ENCODE measurements at regions of chr10 and their contacts with region 1.

Region 1: GRCh38 chr10:70903262-70903921 is 15.0 kb upstream of the PCBD1 start:
- DNase-seq: peak; percentile 23
- ATAC-seq: peak; percentile 75
- H3K4me3 ChIP-seq: no peak overlapping the region
- H3K27ac ChIP-seq: no peak overlapping the region
- H3K4me1 ChIP-seq: no peaks in the 10 kb centered on the region
- H3K27me3 ChIP-seq: peaks cover 6 to 55% of the 10 kb centered on the region in 2 experiments; a peak in 4 of 5 replicates
- CTCF ChIP-seq: peak; percentile 93
- EP300 ChIP-seq: no peak
- POLR2A ChIP-seq: no peak
- RAD21 ChIP-seq: peak; percentile 72

Region 2: DNA sequence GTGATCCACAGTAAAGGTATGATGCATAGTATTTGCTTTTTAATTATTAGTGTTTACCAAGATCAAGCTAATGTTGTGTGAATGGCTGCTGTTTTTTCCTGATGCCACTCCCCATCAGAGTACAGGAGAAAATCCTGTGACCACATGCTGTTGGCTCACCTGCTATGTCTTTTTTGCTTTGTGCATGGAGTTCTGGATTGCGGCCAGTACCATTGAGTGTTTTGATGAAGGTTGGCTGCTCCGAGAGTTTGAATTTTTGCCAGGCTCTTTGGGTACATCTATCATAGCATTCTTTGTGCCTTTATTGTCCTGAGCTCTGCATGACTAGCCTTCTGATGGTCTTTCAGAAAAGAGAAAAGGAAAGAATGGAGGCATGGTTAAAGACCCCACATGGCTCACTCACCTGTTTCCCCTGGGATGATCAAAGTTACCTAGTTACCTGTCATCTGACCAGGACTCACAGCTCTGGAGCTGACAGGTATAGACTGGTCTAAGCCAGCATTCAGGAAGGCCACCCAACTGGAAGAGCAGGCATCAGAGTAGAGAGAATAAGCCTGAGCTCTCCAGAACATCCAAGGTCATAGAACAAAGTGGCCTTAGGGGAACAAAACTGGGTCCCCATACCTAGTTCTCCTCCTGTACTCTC is 99.5 kb before region 1 on chr10:
- CTCF ChIA-PET with region 1: no interaction called
- POLR2A ChIA-PET with region 1: no interaction called
- in situ Hi-C with region 1: no loop called
- intact Hi-C with region 1: no loop called
- DNase-seq: no peak
- ATAC-seq: no peak
- H3K4me3 ChIP-seq: no peak overlapping the region
- H3K27ac ChIP-seq: no peak overlapping the region
- H3K4me1 ChIP-seq: peaks cover 7% of the 10 kb centered on the region
- H3K27me3 ChIP-seq: no peaks in the 10 kb centered on the region; a peak in 2 of 5 replicates
- CTCF ChIP-seq: no peak
- EP300 ChIP-seq: no peak
- POLR2A ChIP-seq: no peak
- RAD21 ChIP-seq: no peak

Region 3: DNA sequence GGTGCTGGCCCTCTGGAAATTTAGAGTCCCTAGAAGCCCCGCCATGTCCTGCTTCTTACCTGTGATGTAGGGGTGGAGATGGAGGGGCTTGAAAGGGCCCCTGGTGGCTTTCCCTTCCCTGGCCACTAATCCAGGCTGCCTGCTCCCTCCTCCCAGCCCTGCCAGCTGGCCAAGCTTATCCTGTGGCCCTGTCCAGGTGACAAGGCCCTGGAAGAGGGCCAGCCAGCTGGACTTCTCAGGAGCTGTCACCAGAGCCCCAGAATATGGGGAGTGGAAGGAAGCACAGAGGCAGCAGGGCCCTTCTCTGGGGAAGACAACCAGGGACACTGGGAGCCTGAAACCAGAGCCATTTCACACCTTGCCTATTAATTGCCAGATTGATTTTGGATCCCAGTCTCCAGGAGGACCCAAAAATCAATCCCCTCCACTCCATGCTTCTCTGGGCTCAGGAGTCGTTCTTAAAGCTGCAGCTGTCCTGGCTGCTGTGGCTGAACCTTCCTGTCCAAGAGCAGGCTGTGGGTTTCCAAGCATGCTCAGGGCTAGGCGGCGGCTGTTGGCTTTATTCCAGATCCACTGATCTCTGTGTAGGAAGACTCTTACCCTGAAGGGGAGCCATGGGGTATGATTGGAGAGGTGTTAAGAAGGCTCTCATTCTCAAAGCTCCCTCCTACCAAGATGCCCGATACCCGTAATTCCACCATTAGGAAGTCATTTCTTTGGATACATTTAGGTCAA is 37.6 kb after region 1 on chr10:
- CTCF ChIA-PET with region 1: no interaction called
- POLR2A ChIA-PET with region 1: no interaction called
- in situ Hi-C with region 1: no loop called
- intact Hi-C with region 1: no loop called
- DNase-seq: no peak
- ATAC-seq: no peak
- H3K4me3 ChIP-seq: no peak overlapping the region
- H3K27ac ChIP-seq: no peak overlapping the region
- H3K4me1 ChIP-seq: no peaks in the 10 kb centered on the region
- H3K27me3 ChIP-seq: peaks cover 12 to 46% of the 10 kb centered on the region in 2 experiments; a peak in 4 of 5 replicates
- CTCF ChIP-seq: no peak
- EP300 ChIP-seq: no peak
- POLR2A ChIP-seq: no peak
- RAD21 ChIP-seq: no peak

Region 4: GRCh38 chr10:71212318-71213126 is 309.1 kb after region 1 on chr10 and contains the start of gene UNC5B:
- CTCF ChIA-PET with region 1: interaction called, 4 read pairs
- POLR2A ChIA-PET with region 1: no interaction called
- in situ Hi-C with region 1: loop called (anchors 5 kb)
- intact Hi-C with region 1: no loop called
- DNase-seq: peak; percentile 54
- ATAC-seq: peak; percentile 89
- H3K4me3 ChIP-seq: peak within 1 kb of the TSS; percentile 29 to 55 (median 47); a peak in 5 of 6 replicates
- H3K27ac ChIP-seq: no peak within 1 kb of the TSS
- H3K4me1 ChIP-seq: peaks cover 29% of the 10 kb centered on the region
- H3K27me3 ChIP-seq: peaks cover 16 to 77% of the 10 kb centered on the region in 2 experiments
- CTCF ChIP-seq: peak; percentile 16; the same call in 1 of the 2 replicates
- EP300 ChIP-seq: no peak
- POLR2A ChIP-seq: no peak
- RAD21 ChIP-seq: peak; percentile 42
- total RNA-seq, gene UNC5B: 0.07 TPM in 1 of 2 replicates, not detected in the other

Region 5: DNA sequence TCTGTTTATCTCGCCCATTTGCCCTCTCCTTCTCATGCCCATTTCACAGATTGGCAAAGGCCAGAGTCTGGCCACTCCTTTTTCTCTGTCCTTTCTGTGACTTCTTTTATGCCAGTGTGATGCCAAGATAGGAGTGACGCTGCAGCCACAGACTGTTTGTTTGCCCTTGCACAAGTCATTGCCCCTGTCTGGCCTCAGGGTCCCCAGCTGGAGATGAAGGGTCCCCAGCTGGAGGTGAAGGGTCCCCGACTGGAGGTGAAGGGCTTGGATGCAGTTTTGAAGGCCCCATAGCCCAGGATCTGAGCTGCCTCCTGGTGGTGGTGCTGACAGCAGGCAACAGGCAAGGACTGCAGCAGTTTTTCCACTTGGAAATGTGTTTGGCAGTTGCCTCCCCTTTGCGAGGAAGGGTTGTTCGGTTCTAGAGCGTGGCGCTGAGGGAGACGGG is 364.9 kb after region 1 on chr10:
- CTCF ChIA-PET with region 1: no interaction called
- POLR2A ChIA-PET with region 1: no interaction called
- in situ Hi-C with region 1: no loop called
- intact Hi-C with region 1: loop called (anchors 1 kb)
- DNase-seq: peak; percentile 10
- ATAC-seq: peak; percentile 53
- H3K4me3 ChIP-seq: no peak overlapping the region
- H3K27ac ChIP-seq: no peak overlapping the region
- H3K4me1 ChIP-seq: peaks cover 13% of the 10 kb centered on the region
- H3K27me3 ChIP-seq: peaks cover 0 to 7% of the 10 kb centered on the region in 2 experiments; a peak in 2 of 5 replicates
- CTCF ChIP-seq: peak; percentile 60
- EP300 ChIP-seq: no peak
- POLR2A ChIP-seq: no peak
- RAD21 ChIP-seq: no peak

Region 6: DNA sequence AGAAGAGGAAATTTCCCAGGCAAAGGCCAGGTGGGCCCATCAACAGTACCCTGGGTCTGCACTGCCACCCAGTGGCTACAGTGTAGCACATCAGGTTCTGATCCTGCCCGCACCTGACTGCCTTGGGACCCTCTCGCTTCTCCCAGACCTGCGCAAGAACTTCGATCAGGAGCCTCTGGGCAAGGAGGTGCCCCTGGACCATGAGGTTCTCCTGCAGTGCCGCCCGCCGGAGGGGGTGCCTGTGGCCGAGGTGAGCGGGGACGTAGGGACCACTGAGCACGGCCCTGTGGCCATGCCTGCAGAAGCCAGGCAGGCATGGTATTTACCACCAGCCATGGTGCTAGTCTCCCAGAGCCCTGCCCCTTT is 381.8 kb after region 1 on chr10:
- CTCF ChIA-PET with region 1: interaction called, 8 read pairs
- POLR2A ChIA-PET with region 1: no interaction called
- in situ Hi-C with region 1: loop called (anchors 5 kb)
- intact Hi-C with region 1: no loop called
- DNase-seq: peak; percentile 28
- ATAC-seq: peak; percentile 87
- H3K4me3 ChIP-seq: no peak overlapping the region
- H3K27ac ChIP-seq: no peak overlapping the region
- H3K4me1 ChIP-seq: peaks cover 2% of the 10 kb centered on the region
- H3K27me3 ChIP-seq: peaks cover 0 to 9% of the 10 kb centered on the region in 2 experiments; a peak in 3 of 5 replicates
- CTCF ChIP-seq: peak; percentile 88
- EP300 ChIP-seq: no peak
- POLR2A ChIP-seq: no peak
- RAD21 ChIP-seq: peak; percentile 51; the same call in 1 of the 2 replicates